Breast epithelium (tissue), 4 donors: ENCODE measurements at regions of chr9 and their contacts with region 1.

Region 1: GRCh38 chr9:135939351-135940265 is 21.6 kb downstream of the UBAC1 start:
- DNase-seq: no peak
- H3K4me3 ChIP-seq: no peak overlapping the region
- H3K27ac ChIP-seq: no peak overlapping the region
- H3K4me1 ChIP-seq: no peaks in the 10 kb centered on the region
- H3K27me3 ChIP-seq: no peaks in the 10 kb centered on the region
- CTCF ChIP-seq: no peak
- POLR2A ChIP-seq: no peak

Region 2: DNA sequence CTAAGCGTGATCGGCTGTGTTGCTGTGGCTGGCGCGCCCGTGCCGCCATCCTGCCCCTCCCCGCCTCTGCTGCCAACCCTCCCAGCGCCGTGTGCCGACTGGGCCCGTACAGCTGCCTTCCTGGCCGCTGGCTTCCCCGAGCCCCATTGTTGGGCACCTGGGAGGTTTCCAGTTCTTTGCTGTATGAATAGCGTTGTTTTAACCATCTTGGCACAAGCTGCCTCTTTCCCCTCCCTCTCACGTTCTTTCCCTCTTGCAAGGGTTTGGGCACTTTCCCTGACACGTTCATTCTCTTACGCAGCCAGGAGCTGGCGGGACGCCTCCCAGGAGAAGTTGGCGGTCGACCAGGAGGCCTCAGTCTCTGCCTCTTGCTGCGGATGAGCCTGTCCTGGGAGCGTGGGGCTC is 1656.5 kb before region 1 on chr9:
- intact Hi-C with region 1: loop called (anchors 5 kb)
- DNase-seq: peak; percentile 83 to 93
- H3K4me3 ChIP-seq: peak overlapping the region in 1 of 3 donors; percentile 1
- H3K27ac ChIP-seq: peak overlapping the region; percentile 43 to 50
- H3K4me1 ChIP-seq: peaks cover 6 to 22% of the 10 kb centered on the region in 2 donors
- H3K27me3 ChIP-seq: no peaks in the 10 kb centered on the region
- CTCF ChIP-seq: no peak
- POLR2A ChIP-seq: no peak

Region 3: DNA sequence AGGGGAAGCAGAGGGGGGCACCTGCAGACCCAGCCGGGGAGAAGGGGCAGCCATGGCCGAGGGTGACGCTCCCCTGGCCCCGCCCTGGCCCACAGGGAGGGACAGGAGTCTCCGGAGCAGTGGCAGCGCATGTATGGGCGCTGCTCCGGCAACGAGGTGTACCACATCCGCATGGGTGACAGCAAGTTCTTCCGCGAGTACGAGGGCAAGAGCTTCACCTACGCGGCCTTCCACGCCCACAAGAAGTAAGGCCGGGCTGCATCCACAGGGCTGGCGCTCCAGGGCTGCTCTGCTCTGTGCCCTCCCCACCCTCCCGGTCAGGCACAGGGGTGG is 169.4 kb before region 1 on chr9:
- intact Hi-C with region 1: loop called (anchors 10 kb)
- DNase-seq: no peak
- H3K4me3 ChIP-seq: no peak overlapping the region
- H3K27ac ChIP-seq: no peak overlapping the region
- H3K4me1 ChIP-seq: no peaks in the 10 kb centered on the region
- H3K27me3 ChIP-seq: peaks cover 0 to 42% of the 10 kb centered on the region in 2 donors
- CTCF ChIP-seq: no peak
- POLR2A ChIP-seq: no peak

Region 4: DNA sequence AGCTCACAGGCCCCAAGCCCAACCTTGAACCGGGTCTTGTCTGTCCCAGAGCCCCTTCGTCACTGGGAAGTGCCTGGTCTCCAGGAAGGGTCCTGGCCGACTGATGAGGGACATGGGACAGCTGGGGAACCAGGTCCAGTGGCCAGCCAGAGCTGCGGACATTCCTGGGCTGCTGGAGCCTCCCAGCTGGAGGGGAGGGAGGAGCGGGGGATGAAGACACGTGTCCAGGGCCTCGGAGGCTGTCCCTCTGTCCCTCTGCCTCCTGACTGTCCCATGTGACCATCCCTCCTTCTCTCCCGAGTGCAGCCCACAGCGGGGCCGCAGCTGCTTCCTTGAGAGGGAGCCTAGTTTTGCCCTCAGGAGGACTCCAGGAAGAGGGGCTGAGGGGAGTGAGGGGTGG is 63.3 kb after region 1 on chr9:
- intact Hi-C with region 1: no loop called
- DNase-seq: no peak
- H3K4me3 ChIP-seq: no peak overlapping the region
- H3K27ac ChIP-seq: no peak overlapping the region
- H3K4me1 ChIP-seq: no peaks in the 10 kb centered on the region
- H3K27me3 ChIP-seq: no peaks in the 10 kb centered on the region
- CTCF ChIP-seq: no peak
- POLR2A ChIP-seq: no peak

Region 5: DNA sequence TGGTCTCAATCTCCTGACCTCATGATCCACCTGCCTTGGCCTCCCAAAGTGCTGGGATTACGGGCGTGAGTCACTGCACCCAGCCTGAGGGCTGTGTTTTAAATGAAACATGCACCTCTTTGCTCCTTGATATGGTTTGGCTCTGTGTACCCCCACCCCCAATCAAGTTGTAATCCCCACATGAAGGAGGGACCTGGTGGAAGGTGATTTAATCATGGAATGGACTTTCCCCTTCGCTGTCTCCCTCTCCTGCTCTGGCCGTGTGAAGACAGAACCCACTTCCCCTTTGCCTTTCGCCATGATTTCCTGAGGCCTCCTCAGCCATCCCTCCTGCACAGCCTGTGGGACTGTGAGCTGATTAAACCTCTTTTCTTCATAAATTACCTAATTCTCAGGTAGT is 618.8 kb after region 1 on chr9:
- intact Hi-C with region 1: loop called (anchors 5 kb)
- DNase-seq: no peak
- H3K4me3 ChIP-seq: no peak overlapping the region
- H3K27ac ChIP-seq: peak overlapping the region; percentile 32 to 35
- H3K4me1 ChIP-seq: peaks cover 5 to 14% of the 10 kb centered on the region in 2 donors
- H3K27me3 ChIP-seq: no peaks in the 10 kb centered on the region
- CTCF ChIP-seq: no peak
- POLR2A ChIP-seq: no peak